ENCODE measurements at regions of chr11 and their contacts with region 1.

Region 1: GRCh38 chr11:126440792-126441514 is 85.5 kb downstream of the ST3GAL4 start:
- DNase-seq: peak; percentile 88
- H3K27ac ChIP-seq: no peak overlapping the region
- CTCF ChIP-seq: peak; percentile 88

Region 2: DNA sequence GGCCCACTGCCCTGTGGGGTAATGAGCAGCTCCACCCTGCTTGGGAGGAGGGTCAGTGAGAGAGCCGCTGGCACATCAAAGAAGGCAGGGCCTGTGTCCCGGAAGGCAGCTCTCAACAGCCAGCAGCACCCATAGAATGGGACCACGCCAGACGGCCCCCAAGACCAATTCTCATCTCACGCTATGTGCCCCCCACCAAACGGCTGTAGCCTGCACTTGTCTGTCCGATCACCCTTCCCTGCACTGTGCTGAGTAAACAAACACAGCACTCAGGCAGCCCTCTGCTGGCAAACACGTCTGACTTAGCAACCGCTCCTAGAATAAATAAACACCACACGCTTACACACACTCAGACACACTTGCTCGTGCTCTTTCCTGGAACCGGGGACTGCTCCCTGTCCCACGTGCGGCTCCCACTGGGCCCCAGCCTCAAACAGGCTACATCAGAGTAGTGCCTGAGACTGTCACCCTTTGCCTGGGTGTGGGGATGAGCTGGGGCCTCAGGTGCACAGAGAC is 325.1 kb before region 1 on chr11:
- CTCF ChIA-PET with region 1: no interaction called
- POLR2A ChIA-PET with region 1: no interaction called
- DNase-seq: no peak
- H3K27ac ChIP-seq: peak overlapping the region; percentile 89
- CTCF ChIP-seq: no peak

Region 3: GRCh38 chr11:126424517-126424916 is 16.4 kb before region 1 on chr11:
- CTCF ChIA-PET with region 1: interaction called, 10 read pairs
- POLR2A ChIA-PET with region 1: no interaction called
- DNase-seq: no peak
- H3K27ac ChIP-seq: no peak overlapping the region
- CTCF ChIP-seq: no peak

Region 4: GRCh38 chr11:126495281-126496220 is 54.6 kb after region 1 on chr11:
- CTCF ChIA-PET with region 1: no interaction called
- POLR2A ChIA-PET with region 1: no interaction called
- DNase-seq: no peak
- H3K27ac ChIP-seq: no peak overlapping the region
- CTCF ChIP-seq: no peak

Region 5: DNA sequence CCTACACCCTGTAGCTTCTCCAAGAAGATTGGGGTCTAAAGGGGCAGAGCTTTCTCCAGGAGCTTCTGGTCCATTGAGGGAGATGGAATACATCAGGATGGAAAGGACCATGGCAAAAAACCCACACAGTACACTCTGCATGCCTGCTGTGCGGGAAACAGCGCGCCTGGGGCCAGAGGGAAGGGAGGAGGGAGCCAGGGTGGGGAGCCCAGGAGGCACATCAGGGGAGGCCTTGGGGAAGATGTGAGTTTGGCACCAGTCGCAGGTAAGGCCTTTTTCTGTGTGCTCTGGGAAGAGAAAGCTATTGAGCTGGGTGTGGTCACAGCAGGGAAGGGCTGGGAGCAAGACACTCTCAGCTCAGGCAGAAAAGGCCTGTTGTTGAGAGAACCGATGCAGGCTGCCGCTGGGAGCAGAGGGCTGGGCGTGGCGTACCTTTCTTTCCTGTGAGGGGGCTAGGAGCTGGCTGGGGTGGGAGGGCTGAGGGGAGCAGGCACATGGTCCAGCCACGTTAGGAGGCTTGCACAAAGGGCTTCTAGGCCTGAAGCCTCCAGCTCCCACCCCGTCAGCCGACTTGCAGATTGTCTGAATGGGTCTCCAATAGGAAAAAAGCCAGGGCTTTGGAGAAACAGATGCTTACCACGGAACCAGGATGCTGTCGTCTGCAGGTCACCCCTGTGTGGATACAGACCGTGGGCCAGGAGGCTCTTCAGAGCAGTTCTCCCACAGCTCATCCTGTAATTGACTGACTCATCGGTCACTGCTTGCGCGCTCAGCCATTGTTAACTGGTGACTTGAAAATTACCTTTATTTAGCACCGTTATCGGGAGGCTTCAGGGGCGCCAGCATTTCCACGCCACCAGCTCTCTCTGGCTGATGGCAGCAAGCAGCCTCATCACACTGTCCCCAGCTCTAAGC is 151.8 kb after region 1 on chr11:
- CTCF ChIA-PET with region 1: no interaction called
- POLR2A ChIA-PET with region 1: no interaction called
- DNase-seq: no peak
- H3K27ac ChIP-seq: no peak overlapping the region
- CTCF ChIP-seq: no peak